ENCODE measurements at regions of chr2 and their contacts with region 1.

Region 1: GRCh38 chr2:37641582-37642171 is 29.8 kb downstream of the CDC42EP3 start:
- DNase-seq: peak; percentile 52
- H3K4me3 ChIP-seq: no peak overlapping the region
- H3K27ac ChIP-seq: peak overlapping the region; percentile 62
- H3K27me3 ChIP-seq: no peaks in the 10 kb centered on the region
- CTCF ChIP-seq: no peak

Region 2: DNA sequence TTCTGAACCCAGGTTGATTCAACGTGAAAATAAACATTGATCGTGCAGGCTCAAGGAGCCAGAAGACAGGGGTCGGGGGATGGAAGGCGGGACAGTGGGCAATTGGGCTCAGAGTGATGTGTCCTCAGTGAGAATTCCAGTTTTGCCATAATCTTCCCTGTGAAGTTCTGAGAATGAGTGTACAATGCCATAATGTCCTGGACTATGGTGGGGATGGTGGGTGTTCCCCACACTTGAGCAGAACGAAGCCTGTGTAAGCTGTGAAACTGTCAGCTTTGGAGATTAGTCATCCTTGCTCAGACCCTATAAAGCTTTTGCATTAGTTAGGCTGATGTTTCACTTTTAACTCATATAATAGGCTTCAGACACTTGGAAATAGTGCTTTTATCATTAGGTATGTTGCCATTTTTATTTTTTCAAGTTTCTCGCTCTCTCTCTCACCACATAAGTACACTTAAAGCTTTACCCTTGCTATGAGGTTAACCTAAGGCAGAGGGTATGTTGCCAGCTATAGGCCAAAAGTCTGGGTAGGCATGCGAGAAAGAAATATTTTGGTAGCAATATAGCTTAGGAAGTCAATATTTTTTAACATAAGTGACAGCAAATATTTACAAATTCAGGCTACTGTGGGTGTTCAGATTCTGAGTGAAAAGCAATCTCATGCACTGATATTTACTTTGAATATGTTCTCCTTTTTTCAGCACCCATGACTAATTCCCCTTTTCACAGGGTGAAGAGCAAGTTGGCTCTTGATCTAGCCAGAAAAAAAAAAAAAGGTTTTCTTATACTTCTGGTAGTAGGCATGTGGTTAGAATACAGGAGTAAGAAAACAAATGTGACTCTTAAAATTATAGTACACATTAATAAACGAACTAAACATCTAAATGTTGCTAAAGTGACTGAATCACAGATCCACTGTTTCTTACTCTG is 17.4 kb before region 1 on chr2:
- CTCF ChIA-PET with region 1: no interaction called
- POLR2A ChIA-PET with region 1: no interaction called
- DNase-seq: no peak
- H3K4me3 ChIP-seq: no peak overlapping the region
- H3K27ac ChIP-seq: no peak overlapping the region
- H3K27me3 ChIP-seq: no peaks in the 10 kb centered on the region
- CTCF ChIP-seq: no peak

Region 3: DNA sequence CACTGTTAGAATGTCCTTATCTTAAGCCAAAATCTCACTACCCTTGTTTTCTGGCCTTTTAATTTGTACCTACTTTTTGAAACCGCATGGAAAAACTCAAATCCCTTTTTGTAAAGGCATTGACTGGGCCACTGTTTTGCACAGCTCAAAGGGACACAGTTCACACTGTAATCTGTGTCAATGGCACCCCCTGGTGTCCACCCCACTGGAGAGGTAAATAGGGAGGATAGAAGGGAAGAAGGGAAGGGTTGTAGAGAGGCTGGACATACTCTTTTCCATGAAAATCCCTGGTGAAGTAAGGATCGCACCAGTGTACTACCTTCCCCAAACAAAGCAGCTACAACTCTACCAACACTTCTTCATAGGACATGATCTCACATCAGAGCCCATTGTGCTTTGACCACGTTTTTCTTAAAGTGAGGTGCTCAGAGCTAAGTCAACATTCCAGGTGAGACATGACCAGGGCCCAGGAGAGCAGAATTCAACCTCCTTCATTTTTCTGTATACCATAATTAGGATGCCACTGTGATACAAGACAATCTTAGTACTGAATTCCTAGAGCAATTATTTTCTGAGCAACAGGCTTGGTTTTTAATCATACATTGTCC is 191.0 kb after region 1 on chr2:
- CTCF ChIA-PET with region 1: interaction called, 13 read pairs
- POLR2A ChIA-PET with region 1: interaction called, 3 read pairs
- DNase-seq: peak; percentile 64
- H3K4me3 ChIP-seq: no peak overlapping the region
- H3K27ac ChIP-seq: no peak overlapping the region
- H3K27me3 ChIP-seq: no peaks in the 10 kb centered on the region
- CTCF ChIP-seq: peak; percentile 85

Region 4: GRCh38 chr2:38056216-38056615 is 414.5 kb after region 1 on chr2:
- CTCF ChIA-PET with region 1: no interaction called
- POLR2A ChIA-PET with region 1: no interaction called
- DNase-seq: no peak
- H3K4me3 ChIP-seq: no peak overlapping the region
- H3K27ac ChIP-seq: no peak overlapping the region
- H3K27me3 ChIP-seq: peaks cover 6% of the 10 kb centered on the region
- CTCF ChIP-seq: no peak